CD4-positive, alpha-beta memory T cell (primary cell): ENCODE measurements at regions of chr17 and their contacts with region 1.

Region 1: GRCh38 chr17:16363749-16364536 is 10.7 kb upstream of the CENPV start:
- DNase-seq: peak; percentile 58 to 69 (median 62)
- H3K4me3 ChIP-seq: no peak overlapping the region
- H3K4me3 Mint-ChIP-seq: no peak overlapping the region
- H3K27ac ChIP-seq: no peak overlapping the region
- H3K27ac Mint-ChIP-seq: peak overlapping the region in 2 of 7 donors; percentile 42 to 43
- H3K4me1 ChIP-seq: no peaks in the 10 kb centered on the region
- H3K4me1 Mint-ChIP-seq: peaks cover 0 to 12% (median 2%) of the 10 kb centered on the region in 4 donors
- H3K27me3 ChIP-seq: no peaks in the 10 kb centered on the region
- H3K27me3 Mint-ChIP-seq: no peaks in the 10 kb centered on the region

Region 2: DNA sequence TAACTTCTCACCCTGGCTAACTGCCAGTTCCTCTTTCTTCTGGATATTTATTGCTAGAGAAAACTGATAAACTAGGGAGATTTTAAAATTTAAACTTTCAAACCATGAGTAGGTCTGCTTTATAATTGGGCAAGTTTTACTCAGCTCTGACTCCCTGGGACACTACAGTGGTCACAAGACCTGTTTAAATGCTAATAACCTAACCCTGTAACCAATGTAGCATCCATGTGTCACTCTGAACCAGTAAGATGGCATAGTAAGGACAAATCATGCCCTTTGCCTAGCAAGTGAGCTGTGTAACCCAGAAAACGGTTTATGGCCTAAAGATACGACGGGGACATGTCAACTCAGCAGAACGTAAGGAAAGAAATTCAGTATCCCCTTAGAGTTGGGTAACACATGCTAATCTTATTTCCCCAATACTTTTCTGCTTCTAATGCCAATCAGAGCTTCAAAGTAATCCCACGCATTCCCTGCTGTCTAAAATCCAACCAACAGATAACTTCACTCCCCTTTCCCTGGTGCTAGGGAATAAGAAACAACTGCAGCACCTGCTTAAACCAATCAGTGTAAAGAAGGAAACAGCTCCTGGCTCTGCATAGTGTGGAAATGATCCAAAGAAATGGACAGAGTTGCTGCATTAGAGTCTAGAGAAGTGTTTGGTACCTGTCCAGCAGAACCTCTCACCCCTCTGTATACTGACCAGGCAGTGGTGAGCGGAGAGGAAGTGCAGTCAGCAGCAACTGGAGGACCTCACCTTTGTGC is 234.3 kb before region 1 on chr17:
- CTCF ChIA-PET with region 1: no interaction called
- POLR2A ChIA-PET with region 1: no interaction called
- intact Hi-C with region 1: no loop called
- DNase-seq: no peak
- H3K4me3 ChIP-seq: no peak overlapping the region
- H3K4me3 Mint-ChIP-seq: no peak overlapping the region
- H3K27ac ChIP-seq: no peak overlapping the region
- H3K27ac Mint-ChIP-seq: peak overlapping the region in 5 of 7 donors; percentile 25 to 86 (median 62)
- H3K4me1 ChIP-seq: no peaks in the 10 kb centered on the region
- H3K4me1 Mint-ChIP-seq: peaks cover 0 to 2% (median 0%) of the 10 kb centered on the region in 4 donors
- H3K27me3 ChIP-seq: no peaks in the 10 kb centered on the region
- H3K27me3 Mint-ChIP-seq: no peaks in the 10 kb centered on the region

Region 3: DNA sequence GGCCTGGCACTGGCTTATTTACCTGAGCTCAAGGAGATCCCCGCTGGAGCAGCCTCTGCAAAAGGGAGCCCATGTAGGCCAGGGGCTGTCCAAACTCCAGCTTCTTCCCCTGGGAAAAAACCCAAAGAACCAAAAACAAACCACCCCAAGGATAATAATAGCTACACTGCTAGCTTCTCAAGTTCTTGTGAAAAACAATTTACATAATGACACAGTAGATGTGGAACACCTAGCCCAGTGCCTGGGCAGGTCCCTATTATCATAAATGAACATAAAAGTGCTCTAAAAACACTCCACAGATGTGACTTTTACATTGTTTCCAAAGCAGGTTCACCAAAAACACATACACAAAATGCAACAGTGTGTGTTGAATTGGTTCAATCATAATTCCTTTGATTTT is 38.0 kb before region 1 on chr17:
- CTCF ChIA-PET with region 1: interaction called, 10 read pairs
- POLR2A ChIA-PET with region 1: no interaction called
- intact Hi-C with region 1: no loop called
- DNase-seq: no peak
- H3K4me3 ChIP-seq: no peak overlapping the region
- H3K4me3 Mint-ChIP-seq: no peak overlapping the region
- H3K27ac ChIP-seq: no peak overlapping the region
- H3K27ac Mint-ChIP-seq: peak overlapping the region in 3 of 7 donors; percentile 25 to 57 (median 35)
- H3K4me1 ChIP-seq: no peaks in the 10 kb centered on the region
- H3K4me1 Mint-ChIP-seq: peaks cover 0 to 2% (median 0%) of the 10 kb centered on the region in 4 donors
- H3K27me3 ChIP-seq: no peaks in the 10 kb centered on the region
- H3K27me3 Mint-ChIP-seq: no peaks in the 10 kb centered on the region

Region 4: DNA sequence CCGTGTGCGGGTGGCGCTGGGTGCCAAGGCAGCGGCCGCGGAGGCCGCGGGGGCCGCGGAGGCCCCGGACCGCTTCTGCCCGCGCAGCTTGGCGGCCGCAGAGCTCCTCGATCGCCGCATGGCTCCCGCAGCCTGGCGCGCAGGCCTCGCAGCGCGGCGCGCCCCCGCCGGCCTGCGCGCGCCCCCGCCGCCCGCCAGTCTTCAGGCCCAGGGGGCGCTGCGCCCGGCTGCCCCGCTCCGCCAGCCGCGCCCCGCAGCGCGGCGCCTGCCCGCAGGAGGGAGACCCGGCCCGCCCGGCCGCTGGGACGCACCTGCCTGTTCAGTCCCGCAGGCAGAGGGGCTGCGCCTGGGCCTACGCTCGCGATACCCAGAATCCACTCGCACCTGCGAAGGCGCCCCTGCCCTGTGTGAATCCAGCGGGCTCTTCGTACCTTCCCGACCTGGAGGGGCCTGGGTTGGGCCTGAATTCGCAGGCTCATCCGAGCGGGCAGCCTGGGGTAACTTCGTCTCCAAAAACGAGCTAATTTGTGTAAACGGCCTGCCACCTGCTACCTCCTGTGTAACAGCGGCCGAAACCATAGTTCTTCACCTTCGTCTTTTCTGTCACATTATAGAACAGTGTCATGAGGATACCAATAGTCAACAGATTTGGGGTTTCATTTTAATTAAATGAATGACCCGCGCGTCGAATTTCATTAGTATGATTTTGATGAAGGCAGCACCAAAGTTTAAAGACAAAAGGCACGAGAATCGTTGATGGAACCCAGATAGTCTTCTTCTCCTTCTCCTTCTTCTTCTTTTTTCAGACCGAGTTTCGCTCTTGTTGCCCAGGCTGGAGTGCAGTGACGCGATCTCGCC is 10.4 kb before region 1 on chr17 and contains the start of gene CENPV:
- CTCF ChIA-PET with region 1: interaction called, 44 read pairs
- POLR2A ChIA-PET with region 1: interaction called, 12 read pairs
- intact Hi-C with region 1: no loop called
- DNase-seq: peak; percentile 64 to 71 (median 66)
- H3K4me3 ChIP-seq: peak within 1 kb of the TSS; percentile 44 to 66
- H3K4me3 Mint-ChIP-seq: peak within 1 kb of the TSS; percentile 91 to 97 (median 94)
- H3K27ac ChIP-seq: peak within 1 kb of the TSS; percentile 47
- H3K27ac Mint-ChIP-seq: peak within 1 kb of the TSS; percentile 45 to 91 (median 79)
- H3K4me1 ChIP-seq: peaks cover 12% of the 10 kb centered on the region
- H3K4me1 Mint-ChIP-seq: peaks cover 9 to 17% (median 15%) of the 10 kb centered on the region in 4 donors
- H3K27me3 ChIP-seq: no peaks in the 10 kb centered on the region
- H3K27me3 Mint-ChIP-seq: no peaks in the 10 kb centered on the region
- total RNA-seq, gene CENPV: 8.4 to 8.6 TPM

Region 5: DNA sequence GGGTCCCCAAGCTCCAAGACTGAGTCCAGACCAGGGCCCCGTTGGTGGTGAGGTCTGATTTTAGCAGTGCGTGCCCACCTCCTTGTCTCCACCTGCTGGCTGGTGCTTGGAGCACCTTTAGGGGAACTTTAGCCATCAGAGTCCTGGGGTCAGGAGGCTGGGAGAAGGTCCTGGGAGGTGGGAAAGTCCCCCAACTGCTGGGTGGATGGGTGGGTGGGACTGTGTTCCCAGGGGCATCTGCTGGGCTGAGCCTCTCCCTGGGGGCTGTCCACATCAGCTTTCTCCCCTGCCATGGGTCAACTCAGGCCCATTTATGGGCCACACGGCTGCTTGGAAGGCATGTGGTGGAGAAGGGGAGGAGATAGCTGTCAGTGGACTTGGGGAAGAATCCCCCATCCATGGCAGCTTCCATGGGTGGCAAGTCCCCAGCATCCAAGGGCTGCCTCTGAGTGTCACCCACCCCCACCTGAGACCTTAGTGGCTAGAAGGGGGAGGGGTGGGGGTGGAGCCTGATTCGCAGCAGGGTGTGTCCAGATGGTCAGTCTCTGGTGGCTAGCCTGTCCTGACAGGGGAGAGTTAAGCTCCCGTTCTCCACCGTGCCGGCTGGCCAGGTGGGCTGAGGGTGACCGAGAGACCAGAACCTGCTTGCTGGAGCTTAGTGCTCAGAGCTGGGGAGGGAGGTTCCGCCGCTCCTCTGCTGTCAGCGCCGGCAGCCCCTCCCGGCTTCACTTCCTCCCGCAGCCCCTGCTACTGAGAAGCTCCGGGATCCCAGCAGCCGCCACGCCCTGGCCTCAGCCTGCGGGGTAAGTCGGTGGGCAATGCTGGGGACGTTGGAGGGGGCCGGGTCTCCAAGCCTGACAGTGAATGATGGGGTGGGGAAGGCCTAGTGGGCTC is 51.3 kb after region 1 on chr17 and contains the start of gene TRPV2:
- CTCF ChIA-PET with region 1: interaction called, 68 read pairs
- POLR2A ChIA-PET with region 1: interaction called, 10 read pairs
- intact Hi-C with region 1: loop called (anchors 1 kb)
- DNase-seq: peak; percentile 40 to 52 (median 42)
- H3K4me3 ChIP-seq: peak within 1 kb of the TSS; percentile 47 to 79
- H3K4me3 Mint-ChIP-seq: peak within 1 kb of the TSS; percentile 91 to 99 (median 97)
- H3K27ac ChIP-seq: peak within 1 kb of the TSS; percentile 92
- H3K27ac Mint-ChIP-seq: peak within 1 kb of the TSS; percentile 97 to 100 (median 99)
- H3K4me1 ChIP-seq: peaks cover 51% of the 10 kb centered on the region
- H3K4me1 Mint-ChIP-seq: peaks cover 26 to 65% (median 43%) of the 10 kb centered on the region in 4 donors
- H3K27me3 ChIP-seq: no peaks in the 10 kb centered on the region
- H3K27me3 Mint-ChIP-seq: no peaks in the 10 kb centered on the region
- total RNA-seq, gene TRPV2: 95.0 to 101 TPM

Region 6: DNA sequence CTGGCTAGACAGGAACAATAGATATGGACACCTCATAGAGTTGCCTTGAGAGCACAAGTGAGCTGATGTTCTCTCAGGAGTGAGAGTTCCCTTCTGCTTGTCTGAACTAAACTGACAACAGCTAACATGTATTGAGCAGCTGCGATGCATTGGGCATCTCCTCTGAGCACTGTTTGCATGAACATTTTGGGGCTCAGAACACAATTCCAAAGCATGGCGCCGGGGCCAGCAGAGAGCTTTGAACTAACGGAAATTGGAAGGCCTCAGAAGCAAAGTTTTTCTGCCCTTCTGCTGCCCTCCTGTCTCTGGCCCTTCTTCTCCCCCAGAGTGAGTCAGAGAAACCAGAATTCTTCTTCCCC is 89.5 kb after region 1 on chr17:
- CTCF ChIA-PET with region 1: interaction called, 20 read pairs
- POLR2A ChIA-PET with region 1: no interaction called
- intact Hi-C with region 1: no loop called
- DNase-seq: no peak
- H3K4me3 ChIP-seq: no peak overlapping the region
- H3K4me3 Mint-ChIP-seq: peak overlapping the region in 1 of 8 donors; percentile 9
- H3K27ac ChIP-seq: no peak overlapping the region
- H3K27ac Mint-ChIP-seq: peak overlapping the region in 6 of 7 donors; percentile 25 to 75 (median 59)
- H3K4me1 ChIP-seq: no peaks in the 10 kb centered on the region
- H3K4me1 Mint-ChIP-seq: peaks cover 2 to 18% (median 10%) of the 10 kb centered on the region in 4 donors
- H3K27me3 ChIP-seq: no peaks in the 10 kb centered on the region
- H3K27me3 Mint-ChIP-seq: no peaks in the 10 kb centered on the region

Region 7: GRCh38 chr17:16551878-16552636 is 188.1 kb after region 1 on chr17:
- CTCF ChIA-PET with region 1: no interaction called
- POLR2A ChIA-PET with region 1: no interaction called
- intact Hi-C with region 1: no loop called
- DNase-seq: no peak
- H3K4me3 ChIP-seq: no peak overlapping the region
- H3K4me3 Mint-ChIP-seq: no peak overlapping the region
- H3K27ac ChIP-seq: no peak overlapping the region
- H3K27ac Mint-ChIP-seq: no peak overlapping the region
- H3K4me1 ChIP-seq: no peaks in the 10 kb centered on the region
- H3K4me1 Mint-ChIP-seq: no peaks in the 10 kb centered on the region
- H3K27me3 ChIP-seq: no peaks in the 10 kb centered on the region
- H3K27me3 Mint-ChIP-seq: no peaks in the 10 kb centered on the region